ENCODE measurements at regions of chr17 and their contacts with region 1.

Region 1: DNA sequence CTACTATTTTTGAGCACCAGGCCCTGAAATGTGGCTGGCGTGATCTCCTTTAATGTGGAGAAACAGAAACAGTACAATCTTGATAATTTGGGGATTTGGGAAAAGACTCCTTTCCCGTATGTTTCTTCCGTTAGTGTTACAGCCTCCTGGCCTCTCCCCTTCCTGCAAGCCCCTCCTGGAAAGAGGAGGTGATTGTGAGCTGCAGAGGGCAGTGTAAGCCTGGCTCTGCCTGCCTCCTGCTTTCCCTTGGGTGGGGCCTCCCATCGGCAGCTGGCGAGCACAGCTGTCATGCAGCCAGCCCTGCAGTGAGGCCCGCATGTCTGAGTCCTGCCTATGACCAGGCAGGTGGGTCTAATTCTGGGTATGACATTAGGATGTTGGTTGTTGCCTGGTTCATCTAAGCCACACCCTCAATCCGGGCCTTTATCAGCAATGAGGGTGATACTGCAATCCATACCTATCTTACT is 48.7 kb upstream of the WSB1 start:
- DNase-seq: peak; percentile 82
- H3K4me3 ChIP-seq: no peak overlapping the region
- H3K27ac ChIP-seq: peak overlapping the region in 1 of 2 donors; percentile 75
- H3K4me1 ChIP-seq: peaks cover 22% of the 10 kb centered on the region
- H3K27me3 ChIP-seq: no peaks in the 10 kb centered on the region
- CTCF ChIP-seq: peak in 2 of 3 experiments; percentile 45 to 58
- POLR2A ChIP-seq: no peak

Region 2: GRCh38 chr17:26962255-26963162 is 282.8 kb before region 1 on chr17:
- intact Hi-C with region 1: no loop called
- DNase-seq: peak; percentile 23
- H3K4me3 ChIP-seq: peak overlapping the region; percentile 42 to 47
- H3K27ac ChIP-seq: peak overlapping the region in 1 of 2 donors; percentile 42
- H3K4me1 ChIP-seq: no peaks in the 10 kb centered on the region
- H3K27me3 ChIP-seq: no peaks in the 10 kb centered on the region
- CTCF ChIP-seq: no peak
- POLR2A ChIP-seq: no peak

Region 3: GRCh38 chr17:27293898-27294688 is 48.8 kb after region 1 on chr17 and contains the start of gene WSB1:
- intact Hi-C with region 1: loop called (anchors 10 kb)
- DNase-seq: peak; percentile 97
- H3K4me3 ChIP-seq: peak within 1 kb of the TSS; percentile 98 to 99
- H3K27ac ChIP-seq: peak within 1 kb of the TSS; percentile 98 to 99
- H3K4me1 ChIP-seq: peaks cover 16% of the 10 kb centered on the region
- H3K27me3 ChIP-seq: no peaks in the 10 kb centered on the region
- CTCF ChIP-seq: no peak
- POLR2A ChIP-seq: peak; percentile 95
- total RNA-seq, gene WSB1: 160 to 189 TPM

Region 4: GRCh38 chr17:27332485-27333409 is 87.5 kb after region 1 on chr17:
- intact Hi-C with region 1: loop called (anchors 1 kb)
- DNase-seq: peak; percentile 98
- H3K4me3 ChIP-seq: peak overlapping the region; percentile 50 to 65
- H3K27ac ChIP-seq: peak overlapping the region; percentile 81 to 92
- H3K4me1 ChIP-seq: peaks cover 8% of the 10 kb centered on the region
- H3K27me3 ChIP-seq: no peaks in the 10 kb centered on the region
- CTCF ChIP-seq: peak; percentile 77 to 92 (median 91)
- POLR2A ChIP-seq: no peak

Region 5: DNA sequence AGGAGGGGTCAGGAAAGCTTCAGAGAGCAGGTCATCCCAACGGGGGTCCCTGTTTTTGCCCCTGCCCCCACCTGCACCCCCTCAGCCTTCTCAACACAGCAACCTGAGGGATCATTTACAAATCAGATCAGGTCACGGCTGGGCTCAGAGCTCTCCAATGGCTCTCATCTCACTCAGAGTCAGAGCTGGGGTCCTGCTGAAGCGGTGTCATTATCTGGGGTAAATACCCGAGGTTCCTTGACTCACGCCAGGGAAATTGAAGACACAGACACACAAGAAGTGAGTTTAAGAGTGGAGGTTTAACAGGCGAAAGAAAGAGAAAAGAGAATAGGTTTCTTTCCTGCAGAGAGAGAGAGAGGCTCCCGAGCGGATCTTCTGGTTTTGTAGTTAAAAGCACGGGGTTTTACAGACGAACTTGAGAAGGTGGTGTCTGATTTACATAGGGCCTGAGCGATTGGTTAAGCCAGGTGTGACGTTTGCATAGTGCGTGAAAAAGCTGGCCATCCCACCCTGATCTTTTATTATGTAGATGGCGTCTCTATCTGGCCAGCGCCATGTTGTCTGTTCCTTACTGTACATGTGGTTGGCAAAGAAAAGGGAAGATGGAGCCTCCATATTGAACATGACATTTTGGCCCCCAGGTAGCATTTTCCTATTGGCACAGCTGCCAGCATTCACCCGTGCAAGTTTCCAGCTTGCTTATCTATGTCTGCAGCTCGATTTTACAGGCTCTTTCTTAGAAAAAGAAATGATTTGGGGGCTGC is 100.1 kb after region 1 on chr17:
- intact Hi-C with region 1: no loop called
- DNase-seq: peak; percentile 48
- H3K4me3 ChIP-seq: no peak overlapping the region
- H3K27ac ChIP-seq: no peak overlapping the region
- H3K4me1 ChIP-seq: peaks cover 11% of the 10 kb centered on the region
- H3K27me3 ChIP-seq: no peaks in the 10 kb centered on the region
- CTCF ChIP-seq: no peak
- POLR2A ChIP-seq: no peak

Measured in testis (tissue), 5 donors.